ENCODE measurements at regions of chr16 and their contacts with region 1.

Region 1: GRCh38 chr16:49592546-49593423 is 219.2 kb downstream of the C16orf78 start:
- DNase-seq: peak; percentile 58
- H3K4me3 Mint-ChIP-seq: no peak overlapping the region
- H3K27ac Mint-ChIP-seq: no peak overlapping the region
- H3K4me1 Mint-ChIP-seq: peaks cover 15% of the 10 kb centered on the region
- H3K27me3 Mint-ChIP-seq: no peaks in the 10 kb centered on the region

Region 2: GRCh38 chr16:49407873-49408550 is 184.8 kb before region 1 on chr16:
- CTCF ChIA-PET with region 1: interaction called, 14 read pairs
- intact Hi-C with region 1: loop called (anchors 1 kb)
- DNase-seq: peak; percentile 85
- H3K4me3 Mint-ChIP-seq: no peak overlapping the region
- H3K27ac Mint-ChIP-seq: no peak overlapping the region
- H3K4me1 Mint-ChIP-seq: peaks cover 1% of the 10 kb centered on the region
- H3K27me3 Mint-ChIP-seq: peaks cover 4% of the 10 kb centered on the region

Region 3: GRCh38 chr16:49491771-49492761 is 100.7 kb before region 1 on chr16:
- CTCF ChIA-PET with region 1: interaction called, 3 read pairs
- intact Hi-C with region 1: loop called (anchors 2 kb)
- DNase-seq: peak; percentile 37
- H3K4me3 Mint-ChIP-seq: no peak overlapping the region
- H3K27ac Mint-ChIP-seq: no peak overlapping the region
- H3K4me1 Mint-ChIP-seq: no peaks in the 10 kb centered on the region
- H3K27me3 Mint-ChIP-seq: no peaks in the 10 kb centered on the region

Region 4: GRCh38 chr16:49513040-49513439 is 79.7 kb before region 1 on chr16:
- CTCF ChIA-PET with region 1: interaction called, 3 read pairs
- intact Hi-C with region 1: loop called (anchors 5 kb)
- DNase-seq: peak; percentile 36
- H3K4me3 Mint-ChIP-seq: no peak overlapping the region
- H3K27ac Mint-ChIP-seq: no peak overlapping the region
- H3K4me1 Mint-ChIP-seq: no peaks in the 10 kb centered on the region
- H3K27me3 Mint-ChIP-seq: no peaks in the 10 kb centered on the region

Region 5: GRCh38 chr16:49528060-49528865 is 64.5 kb before region 1 on chr16:
- CTCF ChIA-PET with region 1: interaction called, 4 read pairs
- intact Hi-C with region 1: loop called (anchors 5 kb)
- DNase-seq: peak; percentile 64
- H3K4me3 Mint-ChIP-seq: peak overlapping the region; percentile 77
- H3K27ac Mint-ChIP-seq: no peak overlapping the region
- H3K4me1 Mint-ChIP-seq: peaks cover 10% of the 10 kb centered on the region
- H3K27me3 Mint-ChIP-seq: no peaks in the 10 kb centered on the region

Region 6: DNA sequence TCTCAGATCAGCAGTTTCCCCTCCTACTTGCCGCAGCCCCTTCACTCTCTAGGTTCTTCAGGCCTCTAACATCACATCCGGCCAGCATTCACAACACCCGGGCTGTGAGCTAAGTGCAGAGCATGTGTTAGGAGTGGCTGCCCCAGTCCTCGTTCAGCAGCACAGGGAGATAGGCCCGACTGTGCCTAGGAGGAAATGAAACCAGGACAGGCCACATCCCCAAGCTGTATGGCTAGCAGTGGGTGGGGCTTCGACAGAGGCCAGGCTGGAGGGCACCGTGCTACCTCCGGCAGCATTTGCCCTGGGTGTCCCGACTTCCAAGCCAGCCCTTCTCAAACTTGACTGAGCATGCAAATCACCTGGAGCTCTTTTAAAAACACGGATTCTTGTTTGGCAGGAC is 17.4 kb before region 1 on chr16:
- CTCF ChIA-PET with region 1: no interaction called
- intact Hi-C with region 1: no loop called
- DNase-seq: no peak
- H3K4me3 Mint-ChIP-seq: no peak overlapping the region
- H3K27ac Mint-ChIP-seq: no peak overlapping the region
- H3K4me1 Mint-ChIP-seq: no peaks in the 10 kb centered on the region
- H3K27me3 Mint-ChIP-seq: no peaks in the 10 kb centered on the region

Region 7: DNA sequence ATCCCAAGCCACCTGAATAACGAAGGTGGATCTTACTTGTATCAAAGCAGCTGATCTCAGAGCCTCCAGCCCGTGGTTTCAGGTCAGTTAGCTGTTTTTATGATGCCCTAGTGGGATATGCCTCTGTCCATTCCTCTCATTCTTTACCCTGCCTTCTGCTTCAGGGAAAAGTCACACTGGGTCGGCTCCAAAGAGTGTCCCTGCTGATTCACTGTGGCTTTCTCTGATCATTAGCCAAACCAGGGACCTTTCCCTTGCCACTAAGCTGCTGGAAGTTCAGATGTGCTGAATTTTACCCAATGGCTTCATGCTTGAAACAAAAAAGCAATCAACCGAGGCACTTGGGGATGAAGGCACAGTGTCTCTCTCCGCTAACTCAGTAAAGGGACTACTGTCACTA is 1728.5 kb after region 1 on chr16:
- CTCF ChIA-PET with region 1: no interaction called
- intact Hi-C with region 1: no loop called
- DNase-seq: no peak
- H3K4me3 Mint-ChIP-seq: no peak overlapping the region
- H3K27ac Mint-ChIP-seq: no peak overlapping the region
- H3K4me1 Mint-ChIP-seq: no peaks in the 10 kb centered on the region
- H3K27me3 Mint-ChIP-seq: no peaks in the 10 kb centered on the region